ENCODE measurements at regions of chr1 and their contacts with region 1.

Region 1: GRCh38 chr1:227312361-227313025 is 5.8 kb downstream of the CDC42BPA start:
- DNase-seq: peak in 1 of 4 experiments; percentile 72
- ATAC-seq: peak; percentile 15
- H3K4me3 ChIP-seq: no peak overlapping the region; the same call in 1 of the 2 replicates
- H3K27ac ChIP-seq: peak overlapping the region; percentile 24; the same call in 2 of the 3 replicates
- H3K4me1 ChIP-seq: peaks cover 7 to 32% of the 10 kb centered on the region in 2 experiments
- H3K27me3 ChIP-seq: no peaks in the 10 kb centered on the region
- CTCF ChIP-seq: no peak
- EP300 ChIP-seq: no peak
- POLR2A ChIP-seq: no peak
- RAD21 ChIP-seq: no peak

Region 2: DNA sequence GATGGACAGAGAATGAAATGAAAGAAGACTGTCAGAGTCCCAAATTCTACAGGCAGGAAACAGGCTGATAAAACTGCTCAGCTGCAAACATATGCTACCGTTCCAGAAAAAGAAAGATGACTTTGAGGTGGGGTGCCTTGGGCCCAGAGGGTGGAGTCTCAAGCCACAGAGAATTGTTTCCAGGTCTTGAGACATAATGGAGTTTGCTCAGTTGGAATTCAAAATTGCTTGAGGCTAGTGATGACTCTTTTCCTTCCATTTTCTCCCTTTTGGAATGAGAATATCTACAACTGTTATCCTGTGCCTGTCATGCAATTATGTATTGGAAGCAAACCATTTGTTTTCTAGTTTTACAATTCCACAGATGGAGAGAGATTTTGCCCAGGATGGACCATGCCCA is 465.7 kb before region 1 on chr1:
- CTCF ChIA-PET with region 1: no interaction called
- POLR2A ChIA-PET with region 1: no interaction called
- in situ Hi-C with region 1: no loop called
- intact Hi-C with region 1: no loop called
- DNase-seq: no peak
- ATAC-seq: no peak
- H3K4me3 ChIP-seq: no peak overlapping the region
- H3K27ac ChIP-seq: no peak overlapping the region
- H3K4me1 ChIP-seq: no peaks in the 10 kb centered on the region
- H3K27me3 ChIP-seq: peaks cover 2 to 4% of the 10 kb centered on the region in 2 experiments; a peak in 2 of 5 replicates
- CTCF ChIP-seq: no peak
- EP300 ChIP-seq: no peak
- POLR2A ChIP-seq: no peak
- RAD21 ChIP-seq: no peak

Region 3: GRCh38 chr1:227299241-227299627 is 13.3 kb before region 1 on chr1:
- CTCF ChIA-PET with region 1: interaction called, 4 read pairs
- POLR2A ChIA-PET with region 1: interaction called, 39 read pairs
- in situ Hi-C with region 1: no loop called
- intact Hi-C with region 1: no loop called
- DNase-seq: no peak
- ATAC-seq: no peak
- H3K4me3 ChIP-seq: no peak overlapping the region
- H3K27ac ChIP-seq: peak overlapping the region; percentile 42; the same call in 2 of the 3 replicates
- H3K4me1 ChIP-seq: peaks cover 5 to 21% of the 10 kb centered on the region in 2 experiments; a peak in 3 of 5 replicates
- H3K27me3 ChIP-seq: no peaks in the 10 kb centered on the region
- CTCF ChIP-seq: no peak
- EP300 ChIP-seq: 0 out of 2 replicates have a peak, but pooled peaks have one; percentile 9
- POLR2A ChIP-seq: no peak
- RAD21 ChIP-seq: no peak

Region 4: DNA sequence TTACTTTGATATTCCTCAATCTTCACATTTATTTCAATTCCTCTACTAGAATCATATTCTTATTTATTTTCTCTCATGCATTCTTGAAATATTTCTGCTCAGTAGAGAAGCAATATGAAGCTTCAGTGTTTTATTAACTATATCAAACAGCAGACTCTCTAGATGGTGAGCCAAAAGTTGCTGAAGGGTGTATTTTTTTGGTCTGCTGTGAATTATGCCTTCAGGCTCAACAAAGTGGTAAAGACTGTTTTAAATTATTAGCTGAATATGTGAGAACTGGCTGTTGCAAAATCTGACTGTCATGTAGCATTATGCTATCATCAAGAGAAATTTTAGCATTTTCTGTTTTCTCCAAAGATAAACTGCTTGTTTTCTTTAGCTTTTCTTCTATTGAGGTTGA is 30.7 kb after region 1 on chr1:
- CTCF ChIA-PET with region 1: no interaction called
- POLR2A ChIA-PET with region 1: no interaction called
- in situ Hi-C with region 1: no loop called
- intact Hi-C with region 1: no loop called
- DNase-seq: no peak
- ATAC-seq: no peak
- H3K4me3 ChIP-seq: no peak overlapping the region
- H3K27ac ChIP-seq: no peak overlapping the region
- H3K4me1 ChIP-seq: peaks cover 0 to 7% of the 10 kb centered on the region in 2 experiments; a peak in 2 of 5 replicates
- H3K27me3 ChIP-seq: no peaks in the 10 kb centered on the region
- CTCF ChIP-seq: no peak
- EP300 ChIP-seq: no peak
- POLR2A ChIP-seq: no peak
- RAD21 ChIP-seq: no peak

Region 5: DNA sequence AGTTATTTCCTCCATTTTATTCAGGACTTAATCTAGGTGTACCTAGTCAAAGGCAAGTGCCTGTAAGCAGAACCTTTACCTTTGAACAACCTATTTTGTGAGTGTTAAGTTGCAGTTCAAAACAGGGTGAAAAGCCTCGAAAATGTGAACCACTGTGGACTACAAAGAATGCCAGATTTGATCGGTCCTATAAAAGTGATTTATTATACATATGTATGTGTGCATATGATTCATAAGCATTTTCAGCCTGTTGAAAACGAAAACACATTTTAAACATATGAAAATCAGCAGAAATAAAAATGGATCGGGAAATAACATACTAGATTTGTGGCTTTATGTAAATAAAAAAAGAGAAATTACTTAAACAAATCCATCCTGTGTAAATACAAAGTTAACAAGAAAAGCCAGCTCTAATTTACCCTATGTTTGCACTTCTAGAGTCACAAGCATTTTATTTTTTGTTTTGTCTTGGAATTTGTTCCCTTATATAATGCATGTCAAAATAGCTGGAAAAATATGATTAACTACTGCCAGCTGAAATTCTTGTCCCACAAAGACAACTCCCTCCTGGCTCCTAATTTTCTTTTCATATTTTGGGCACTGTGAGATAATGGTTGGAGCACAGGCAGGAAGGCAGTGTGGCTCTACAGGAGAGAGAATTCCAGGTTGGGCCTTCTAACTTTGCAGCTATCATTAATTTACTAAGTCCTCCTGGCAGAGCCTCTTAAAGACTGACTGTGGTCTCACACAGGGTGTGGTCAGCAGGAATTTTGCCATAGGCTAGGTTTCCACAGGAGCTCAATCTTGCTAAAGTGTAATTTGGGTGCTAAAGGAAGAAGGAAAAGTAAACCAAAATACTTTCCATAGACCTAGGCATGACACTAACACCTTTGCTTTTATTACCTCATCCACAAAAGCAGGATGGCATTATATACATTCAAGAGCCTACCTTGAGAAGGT is 76.0 kb after region 1 on chr1:
- CTCF ChIA-PET with region 1: no interaction called
- POLR2A ChIA-PET with region 1: no interaction called
- in situ Hi-C with region 1: no loop called
- intact Hi-C with region 1: no loop called
- DNase-seq: no peak
- ATAC-seq: peak; percentile 18
- H3K4me3 ChIP-seq: no peak overlapping the region
- H3K27ac ChIP-seq: no peak overlapping the region
- H3K4me1 ChIP-seq: peaks cover 22 to 23% of the 10 kb centered on the region in 2 experiments; a peak in 4 of 5 replicates
- H3K27me3 ChIP-seq: no peaks in the 10 kb centered on the region
- CTCF ChIP-seq: no peak
- EP300 ChIP-seq: no peak
- POLR2A ChIP-seq: no peak
- RAD21 ChIP-seq: no peak

Measured in K562 (cell line).